HCT116 (cell line): ENCODE measurements at regions of chr6 and their contacts with region 1.

Region 1: GRCh38 chr6:170516783-170517616 is 36.1 kb downstream of the PSMB1 start:
- DNase-seq: peak; percentile 48
- ATAC-seq: peak; percentile 99
- H3K4me3 ChIP-seq: no peak overlapping the region
- H3K27ac ChIP-seq: no peak overlapping the region
- H3K4me1 ChIP-seq: no peaks in the 10 kb centered on the region
- H3K27me3 ChIP-seq: peaks cover 5% of the 10 kb centered on the region; the same call in 1 of the 2 replicates
- CTCF ChIP-seq: peak; percentile 72 to 81 (median 79)
- POLR2A ChIP-seq: no peak
- RAD21 ChIP-seq: peak; percentile 90

Region 2: GRCh38 chr6:168895102-168895812 is 1621.7 kb before region 1 on chr6:
- CTCF ChIA-PET with region 1: no interaction called
- POLR2A ChIA-PET with region 1: no interaction called
- RAD21 ChIA-PET with region 1: interaction called in 1 of 2 experiments, 4 read pairs
- intact Hi-C with region 1: loop called (anchors 2 kb)
- DNase-seq: peak; percentile 43
- ATAC-seq: peak; percentile 96
- H3K4me3 ChIP-seq: 0 out of 4 replicates have a peak overlapping the region, but pooled peaks have one; percentile 7 to 29
- H3K27ac ChIP-seq: no peak overlapping the region
- H3K4me1 ChIP-seq: peaks cover 0 to 12% of the 10 kb centered on the region in 2 experiments; a peak in 2 of 4 replicates
- H3K27me3 ChIP-seq: no peaks in the 10 kb centered on the region
- CTCF ChIP-seq: peak; percentile 89 to 93 (median 92)
- POLR2A ChIP-seq: no peak
- RAD21 ChIP-seq: peak; percentile 94

Region 3: DNA sequence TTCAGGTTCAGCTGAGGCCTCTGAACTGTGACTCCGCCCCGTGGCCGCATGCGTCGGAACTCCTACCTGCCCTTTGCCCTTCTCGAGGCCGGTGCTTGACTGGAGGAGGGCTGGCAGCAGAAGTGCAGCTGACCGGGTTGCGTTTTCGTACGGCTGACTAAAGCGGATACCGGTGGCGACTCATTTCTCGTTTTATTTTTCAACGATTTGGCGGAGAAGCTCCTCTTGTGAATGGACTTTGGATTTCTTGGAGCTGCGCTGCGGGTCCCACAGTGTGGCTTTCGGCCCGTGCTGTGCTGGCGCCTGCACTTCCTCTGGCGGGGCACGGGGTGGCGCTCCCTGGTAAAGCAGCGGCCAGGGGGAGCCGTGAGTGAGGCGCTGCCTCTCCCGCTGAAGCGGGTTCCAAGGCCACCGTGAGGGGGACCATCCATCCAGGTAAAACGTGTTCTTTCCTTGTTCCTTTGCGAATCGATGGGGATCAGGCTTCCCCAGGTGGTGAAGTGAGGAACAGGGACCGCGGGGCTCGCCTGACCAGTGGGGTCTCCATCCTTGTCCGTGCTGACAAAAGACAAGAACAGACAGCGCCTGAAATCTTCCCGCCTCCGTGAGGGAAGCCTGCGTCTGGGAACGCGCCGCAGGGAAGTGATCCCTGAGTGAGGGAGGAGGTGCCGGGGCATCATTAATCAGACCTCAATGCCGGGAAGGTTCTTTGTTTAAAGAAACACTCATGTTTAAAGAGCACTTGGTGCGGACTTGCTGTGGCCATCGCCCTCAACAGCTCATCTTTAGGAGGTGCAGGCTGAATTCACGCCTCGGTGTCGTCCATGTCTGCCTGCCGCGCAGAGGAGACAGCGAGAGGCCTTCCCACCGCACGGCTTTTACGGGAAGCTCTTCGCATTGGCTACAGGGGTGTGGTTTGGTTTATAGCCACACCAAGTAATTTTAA is 726.7 kb before region 1 on chr6:
- CTCF ChIA-PET with region 1: interaction called, 12 read pairs
- POLR2A ChIA-PET with region 1: no interaction called
- RAD21 ChIA-PET with region 1: interaction called in 1 of 2 experiments, 3 read pairs
- intact Hi-C with region 1: loop called (anchors 1 kb)
- DNase-seq: peak; percentile 35
- ATAC-seq: peak; percentile 96
- H3K4me3 ChIP-seq: peak overlapping the region; percentile 41 to 58
- H3K27ac ChIP-seq: no peak overlapping the region
- H3K4me1 ChIP-seq: peaks cover 0 to 16% of the 10 kb centered on the region in 2 experiments; a peak in 3 of 4 replicates
- H3K27me3 ChIP-seq: no peaks in the 10 kb centered on the region; the same call in 1 of the 2 replicates
- CTCF ChIP-seq: peak; percentile 94 to 97 (median 96)
- POLR2A ChIP-seq: no peak
- RAD21 ChIP-seq: peak; percentile 97

Region 4: DNA sequence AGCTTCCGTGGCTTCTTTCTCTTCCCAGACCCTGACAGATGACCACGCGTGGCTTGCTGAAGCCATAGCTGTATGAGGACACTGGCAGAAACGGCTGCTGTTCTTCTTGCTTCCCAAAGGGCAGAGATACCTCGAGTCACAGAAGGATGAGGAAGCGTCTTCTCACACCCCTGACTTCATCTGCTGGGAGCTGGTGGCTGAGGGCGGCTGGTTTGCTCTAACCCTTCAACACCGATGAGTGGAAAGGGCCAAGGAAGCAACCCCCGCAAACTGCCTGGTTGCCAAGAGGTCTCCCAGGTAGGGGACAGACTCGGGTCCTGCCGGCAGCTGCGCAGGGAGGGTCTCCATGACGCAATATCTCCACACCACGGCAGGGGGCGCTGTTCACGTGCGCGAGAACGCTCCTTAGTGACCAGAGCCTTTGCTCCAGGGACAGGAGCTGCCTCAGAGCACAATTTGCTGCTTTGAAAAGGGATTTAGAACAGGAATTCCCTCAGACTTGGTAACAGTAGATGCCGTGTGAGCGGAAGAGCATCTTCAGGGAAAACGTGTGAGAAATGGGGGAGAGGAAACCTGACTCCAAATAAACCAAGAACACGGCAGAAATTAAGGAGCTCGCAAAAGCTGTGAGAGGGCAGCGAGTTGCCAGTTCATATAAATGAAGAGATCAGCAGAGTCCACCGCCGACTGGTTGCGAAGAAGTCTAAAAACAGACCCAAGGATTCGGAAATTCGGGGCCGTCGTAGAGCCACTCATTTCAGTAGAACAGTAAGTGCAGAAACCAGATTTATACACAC is 685.4 kb before region 1 on chr6:
- CTCF ChIA-PET with region 1: interaction called, 39 read pairs
- POLR2A ChIA-PET with region 1: no interaction called
- RAD21 ChIA-PET with region 1: interaction called, 4 to 7 read pairs
- intact Hi-C with region 1: loop called (anchors 1 kb)
- DNase-seq: peak; percentile 38
- ATAC-seq: peak; percentile 98
- H3K4me3 ChIP-seq: no peak overlapping the region
- H3K27ac ChIP-seq: no peak overlapping the region
- H3K4me1 ChIP-seq: peaks cover 0 to 6% of the 10 kb centered on the region in 2 experiments; a peak in 1 of 4 replicates
- H3K27me3 ChIP-seq: peaks cover 5% of the 10 kb centered on the region; the same call in 1 of the 2 replicates
- CTCF ChIP-seq: peak; percentile 84 to 97 (median 89)
- POLR2A ChIP-seq: no peak
- RAD21 ChIP-seq: peak; percentile 90

Region 5: DNA sequence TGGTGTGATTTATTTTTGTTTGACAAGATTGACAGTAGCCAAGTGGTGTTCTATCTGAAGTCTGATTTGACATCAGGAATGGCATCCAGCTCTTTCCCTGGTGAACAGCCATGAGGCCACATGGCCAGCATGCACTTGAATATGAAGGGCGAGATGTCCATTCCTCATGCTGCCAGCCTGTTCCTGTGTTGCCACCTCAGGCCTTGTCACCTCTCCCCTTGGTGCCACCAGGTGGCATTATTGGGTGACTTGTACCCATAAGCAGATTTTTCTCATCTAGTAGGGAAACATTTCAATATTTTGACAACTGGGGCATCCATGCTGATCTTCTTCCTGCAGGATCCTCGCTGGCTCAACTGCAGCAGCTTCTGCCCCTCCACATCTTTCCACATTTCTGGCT is 566.4 kb before region 1 on chr6:
- CTCF ChIA-PET with region 1: interaction called, 4 read pairs
- POLR2A ChIA-PET with region 1: no interaction called
- RAD21 ChIA-PET with region 1: no interaction called
- intact Hi-C with region 1: loop called (anchors 2 kb)
- DNase-seq: peak; percentile 32
- ATAC-seq: peak; percentile 84
- H3K4me3 ChIP-seq: no peak overlapping the region
- H3K27ac ChIP-seq: no peak overlapping the region
- H3K4me1 ChIP-seq: no peaks in the 10 kb centered on the region
- H3K27me3 ChIP-seq: no peaks in the 10 kb centered on the region
- CTCF ChIP-seq: peak; percentile 51 to 63 (median 57); a peak in 5 of 6 replicates
- POLR2A ChIP-seq: no peak
- RAD21 ChIP-seq: peak; percentile 80

Region 6: GRCh38 chr6:170367241-170367640 is 149.8 kb before region 1 on chr6:
- CTCF ChIA-PET with region 1: no interaction called
- POLR2A ChIA-PET with region 1: no interaction called
- RAD21 ChIA-PET with region 1: no interaction called
- intact Hi-C with region 1: no loop called
- DNase-seq: no peak
- ATAC-seq: no peak
- H3K4me3 ChIP-seq: no peak overlapping the region
- H3K27ac ChIP-seq: no peak overlapping the region
- H3K4me1 ChIP-seq: no peaks in the 10 kb centered on the region
- H3K27me3 ChIP-seq: no peaks in the 10 kb centered on the region
- CTCF ChIP-seq: no peak
- POLR2A ChIP-seq: no peak
- RAD21 ChIP-seq: no peak